ENCODE measurements at regions of chr12 and their contacts with region 1.

Region 1: GRCh38 chr12:112012775-112013600 is at the starts of genes ERP29 and TMEM116:
- DNase-seq: peak; percentile 100
- ATAC-seq: peak; percentile 85
- H3K4me3 Mint-ChIP-seq: peak within 1 kb of the TSS; percentile 98
- H3K27ac Mint-ChIP-seq: peak within 1 kb of the TSS; percentile 98
- H3K4me1 Mint-ChIP-seq: peaks cover 45% of the 10 kb centered on the region
- H3K27me3 Mint-ChIP-seq: no peaks in the 10 kb centered on the region
- CTCF ChIP-seq: peak; percentile 63
- total RNA-seq, gene ERP29: 82.9 to 83.7 TPM
- total RNA-seq, gene TMEM116: 13.8 to 16.3 TPM

Region 2: GRCh38 chr12:111942557-111942956 is 70.4 kb before region 1 on chr12:
- CTCF ChIA-PET with region 1: interaction called, 31 read pairs
- POLR2A ChIA-PET with region 1: interaction called, 8 read pairs
- intact Hi-C with region 1: loop called (anchors 5 kb)
- DNase-seq: peak; percentile 11
- ATAC-seq: no peak
- H3K4me3 Mint-ChIP-seq: no peak overlapping the region
- H3K27ac Mint-ChIP-seq: peak overlapping the region; percentile 21
- H3K4me1 Mint-ChIP-seq: peaks cover 15% of the 10 kb centered on the region
- H3K27me3 Mint-ChIP-seq: no peaks in the 10 kb centered on the region
- CTCF ChIP-seq: no peak

Region 3: DNA sequence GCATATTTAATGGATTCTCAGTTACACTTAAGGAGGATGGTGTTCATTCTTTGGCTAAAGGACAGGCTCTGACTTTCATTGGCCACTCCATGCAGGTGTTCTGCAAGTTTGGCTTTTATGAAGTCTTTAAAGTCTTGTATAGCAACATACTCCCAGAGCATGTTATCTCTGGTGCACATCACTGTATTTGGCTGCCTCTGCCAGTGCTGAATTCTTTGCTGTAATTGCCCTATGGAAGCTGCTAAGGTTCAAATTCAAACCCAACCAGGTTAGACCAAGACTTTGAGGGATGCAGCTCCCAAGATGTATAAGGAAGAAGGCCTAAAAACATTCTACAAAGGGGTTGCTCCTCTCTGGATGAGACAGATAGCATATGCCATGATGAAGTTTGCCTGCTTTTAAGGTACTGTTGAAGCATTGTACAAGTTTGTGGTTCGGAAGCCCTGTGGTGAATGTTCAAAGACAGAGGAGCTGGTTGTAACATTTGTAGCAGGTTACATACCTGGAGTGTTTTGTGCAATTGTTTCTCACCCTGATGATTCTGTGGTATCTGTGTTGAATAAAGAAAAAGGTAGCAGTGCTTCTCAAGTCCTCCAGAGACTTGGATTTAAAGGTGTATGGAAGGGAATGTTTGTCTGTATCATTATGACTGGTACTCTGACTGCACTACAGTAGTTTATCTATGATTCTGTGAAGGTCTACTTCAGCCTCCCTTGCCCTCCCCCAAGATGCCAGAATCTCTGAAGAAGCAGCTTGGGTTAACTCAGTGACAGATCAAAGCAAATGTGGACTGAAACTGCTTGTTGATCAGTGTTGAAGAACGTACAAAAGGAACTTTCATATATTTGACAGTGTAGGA is 19.5 kb before region 1 on chr12:
- CTCF ChIA-PET with region 1: interaction called, 6 read pairs
- POLR2A ChIA-PET with region 1: interaction called, 27 read pairs
- intact Hi-C with region 1: no loop called
- DNase-seq: peak; percentile 49
- ATAC-seq: peak; percentile 78
- H3K4me3 Mint-ChIP-seq: peak overlapping the region; percentile 75
- H3K27ac Mint-ChIP-seq: peak overlapping the region; percentile 79
- H3K4me1 Mint-ChIP-seq: peaks cover 63% of the 10 kb centered on the region
- H3K27me3 Mint-ChIP-seq: no peaks in the 10 kb centered on the region
- CTCF ChIP-seq: no peak

Region 4: DNA sequence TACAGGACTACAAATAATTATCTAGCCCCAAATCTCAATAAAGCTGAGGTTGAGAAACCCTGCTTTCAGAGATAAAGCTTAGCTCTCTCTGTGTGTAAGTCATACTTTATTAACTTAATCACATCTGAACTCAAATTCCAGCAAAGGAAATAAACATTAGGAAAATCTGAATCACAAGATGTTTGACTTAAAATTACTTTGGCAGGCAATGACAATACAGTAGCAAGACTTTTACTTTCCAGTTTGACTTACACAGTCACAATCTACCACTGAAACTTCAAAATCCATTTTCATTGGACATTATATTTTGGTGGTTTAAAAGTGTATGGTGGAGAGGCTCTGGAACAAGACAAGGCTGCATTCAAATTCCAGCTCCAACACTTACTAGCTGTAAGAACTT is 11.4 kb before region 1 on chr12:
- CTCF ChIA-PET with region 1: interaction called, 12 read pairs
- POLR2A ChIA-PET with region 1: interaction called, 27 read pairs
- intact Hi-C with region 1: no loop called
- DNase-seq: no peak
- ATAC-seq: peak; percentile 81
- H3K4me3 Mint-ChIP-seq: peak overlapping the region; percentile 51
- H3K27ac Mint-ChIP-seq: peak overlapping the region; percentile 90
- H3K4me1 Mint-ChIP-seq: peaks cover 64% of the 10 kb centered on the region
- H3K27me3 Mint-ChIP-seq: no peaks in the 10 kb centered on the region
- CTCF ChIP-seq: no peak

Region 5: DNA sequence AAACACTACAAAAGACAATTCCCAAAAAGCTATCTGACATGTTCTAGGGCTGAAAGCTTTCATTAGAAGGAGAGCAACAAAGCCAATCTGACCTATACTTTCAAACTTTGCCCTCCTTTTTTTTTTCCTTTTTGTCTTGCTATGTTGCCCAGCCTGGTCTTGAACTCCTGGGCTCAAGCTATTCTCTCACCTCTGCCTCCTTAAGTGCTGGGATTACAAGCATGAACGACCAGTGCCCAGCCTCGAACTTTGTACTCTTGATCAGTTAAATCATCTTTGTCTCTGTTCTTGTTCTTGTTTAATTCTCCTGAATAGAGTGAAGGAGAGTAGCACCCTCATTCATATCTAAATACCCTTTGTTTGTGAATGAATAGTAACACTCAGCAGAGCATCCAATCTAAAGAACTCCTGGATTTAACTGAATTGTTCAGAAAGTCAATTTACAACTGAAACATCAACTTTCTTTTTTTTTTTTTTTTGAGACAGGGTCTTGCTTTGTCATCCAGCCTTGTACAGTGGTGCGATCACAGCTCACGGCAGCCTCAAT is 22.3 kb after region 1 on chr12:
- CTCF ChIA-PET with region 1: no interaction called
- POLR2A ChIA-PET with region 1: no interaction called
- intact Hi-C with region 1: no loop called
- DNase-seq: no peak
- ATAC-seq: no peak
- H3K4me3 Mint-ChIP-seq: no peak overlapping the region
- H3K27ac Mint-ChIP-seq: no peak overlapping the region
- H3K4me1 Mint-ChIP-seq: no peaks in the 10 kb centered on the region
- H3K27me3 Mint-ChIP-seq: no peaks in the 10 kb centered on the region
- CTCF ChIP-seq: no peak